Head of caudate nucleus (tissue), 42 donors: ENCODE measurements at regions of chr1 and their contacts with region 1.

Region 1: GRCh38 chr1:105793536-105794146 is 1262.8 kb upstream of the PRMT6 start:
- DNase-seq: peak in 40 of 42 donors; percentile 11 to 78 (median 52)

Region 2: GRCh38 chr1:104780470-104781078 is 1013.1 kb before region 1 on chr1:
- intact Hi-C with region 1: loop called (anchors 5 kb)
- DNase-seq: peak in 13 of 42 donors; percentile 4 to 62 (median 21)

Region 3: DNA sequence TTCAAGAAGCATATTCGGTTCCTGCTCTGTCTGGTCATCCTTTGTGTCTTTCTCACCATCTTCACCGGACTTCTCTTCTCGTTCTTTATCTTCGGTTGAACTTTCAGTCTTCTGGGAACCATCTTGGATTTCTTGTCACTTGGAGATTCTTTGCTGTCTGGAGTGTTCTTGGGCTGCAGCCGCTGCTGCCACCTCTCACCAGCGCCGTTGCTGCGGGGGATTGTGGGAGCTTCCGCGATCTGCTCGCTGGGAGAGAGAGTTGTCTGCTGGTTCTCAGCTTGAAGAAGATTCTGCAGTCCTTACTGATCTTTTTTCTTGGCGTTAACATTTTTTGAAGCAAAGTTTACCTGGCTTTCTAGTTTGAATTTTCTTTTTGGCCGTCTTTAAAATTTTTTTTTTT is 97.7 kb after region 1 on chr1:
- intact Hi-C with region 1: no loop called
- DNase-seq: no peak